ENCODE measurements at regions of chr3 and their contacts with region 1.

Region 1: GRCh38 chr3:62209101-62209500 is 164.2 kb downstream of the FEZF2 start:
- DNase-seq: no peak
- ATAC-seq: no peak
- H3K4me3 ChIP-seq: no peak overlapping the region
- H3K27ac ChIP-seq: no peak overlapping the region
- H3K4me1 ChIP-seq: no peaks in the 10 kb centered on the region
- H3K27me3 ChIP-seq: no peaks in the 10 kb centered on the region
- CTCF ChIP-seq: no peak

Region 2: GRCh38 chr3:62284442-62284841 is 75.3 kb after region 1 on chr3:
- CTCF ChIA-PET with region 1: no interaction called
- POLR2A ChIA-PET with region 1: no interaction called
- intact Hi-C with region 1: no loop called
- DNase-seq: no peak
- ATAC-seq: no peak
- H3K4me3 ChIP-seq: no peak overlapping the region
- H3K27ac ChIP-seq: no peak overlapping the region
- H3K4me1 ChIP-seq: no peaks in the 10 kb centered on the region
- H3K27me3 ChIP-seq: no peaks in the 10 kb centered on the region
- CTCF ChIP-seq: no peak

Region 3: DNA sequence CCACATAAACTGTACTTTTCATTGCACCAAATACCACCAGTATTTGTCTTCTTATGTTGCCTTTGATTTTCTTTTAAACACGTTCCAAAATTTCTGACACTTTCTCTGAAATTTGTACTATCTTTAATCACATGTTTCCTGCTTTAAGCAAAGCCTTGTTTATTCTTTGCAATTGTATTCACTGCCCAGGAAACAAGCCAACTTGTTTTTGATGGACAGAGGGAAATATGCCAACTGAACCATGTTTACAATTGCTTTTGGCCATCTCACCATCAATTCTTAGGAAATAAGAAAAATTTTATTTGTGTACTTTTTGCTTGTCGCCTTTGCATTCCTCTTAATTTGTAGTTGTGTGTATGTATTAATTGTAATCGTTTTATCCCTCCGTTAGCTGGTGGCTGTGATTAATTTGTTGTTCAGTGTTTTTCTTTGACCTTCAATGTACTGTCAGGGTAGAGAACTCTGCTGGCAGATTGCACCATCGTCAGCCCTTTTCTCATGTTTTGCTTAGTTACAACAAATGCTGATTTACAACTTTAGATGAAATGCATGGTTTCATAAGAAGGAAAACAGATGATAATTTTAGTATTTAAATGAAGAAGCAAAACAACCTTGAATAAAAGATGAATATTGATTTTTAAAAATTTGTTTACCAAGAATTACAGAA is 183.7 kb after region 1 on chr3:
- CTCF ChIA-PET with region 1: no interaction called
- POLR2A ChIA-PET with region 1: interaction called, 11 read pairs
- intact Hi-C with region 1: no loop called
- DNase-seq: no peak
- ATAC-seq: no peak
- H3K4me3 ChIP-seq: no peak overlapping the region
- H3K27ac ChIP-seq: no peak overlapping the region
- H3K4me1 ChIP-seq: no peaks in the 10 kb centered on the region
- H3K27me3 ChIP-seq: 0 out of 2 replicates have a peak, but pooled peaks cover 6% of the 10 kb centered on the region
- CTCF ChIP-seq: no peak

Measured in PC-3 (cell line).